Vagina (tissue), 2 donors: ENCODE measurements at regions of chr2 and their contacts with region 1.

Region 1: GRCh38 chr2:99960790-99961189 is 181.6 kb downstream of the AFF3 start:
- DNase-seq: peak in 1 of 2 donors; percentile 58
- H3K4me3 ChIP-seq: no peak overlapping the region
- H3K27ac ChIP-seq: no peak overlapping the region
- H3K4me1 ChIP-seq: no peaks in the 10 kb centered on the region
- H3K27me3 ChIP-seq: no peaks in the 10 kb centered on the region
- CTCF ChIP-seq: no peak
- POLR2A ChIP-seq: no peak

Region 2: DNA sequence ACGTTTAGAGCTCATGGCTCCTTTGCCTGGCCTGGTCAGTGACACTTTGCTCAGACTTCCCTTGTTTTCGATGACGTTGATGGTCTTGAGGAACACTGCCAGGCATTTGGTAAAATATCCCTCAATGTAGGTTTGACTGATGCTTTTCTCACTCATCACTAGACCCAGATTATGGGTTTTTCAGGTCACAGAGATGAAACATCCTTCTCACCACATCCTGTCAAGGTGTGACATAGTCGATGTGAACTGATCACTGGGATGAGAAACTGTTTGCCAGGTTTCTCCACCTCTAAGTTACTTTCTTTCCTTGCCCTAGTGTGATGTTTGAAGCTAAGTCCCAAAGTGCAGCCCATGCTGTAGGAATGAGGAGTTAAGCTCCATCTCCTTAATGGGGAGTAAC is 100.1 kb after region 1 on chr2:
- intact Hi-C with region 1: no loop called
- DNase-seq: no peak
- H3K4me3 ChIP-seq: no peak overlapping the region
- H3K27ac ChIP-seq: no peak overlapping the region
- H3K4me1 ChIP-seq: peaks cover 6% of the 10 kb centered on the region
- H3K27me3 ChIP-seq: no peaks in the 10 kb centered on the region
- CTCF ChIP-seq: no peak
- POLR2A ChIP-seq: no peak

Region 3: GRCh38 chr2:101080211-101081068 is 1119.7 kb after region 1 on chr2:
- intact Hi-C with region 1: loop called (anchors 5 kb)
- DNase-seq: no peak
- H3K4me3 ChIP-seq: no peak overlapping the region
- H3K27ac ChIP-seq: peak overlapping the region; percentile 48
- H3K4me1 ChIP-seq: peaks cover 8% of the 10 kb centered on the region
- H3K27me3 ChIP-seq: no peaks in the 10 kb centered on the region
- CTCF ChIP-seq: no peak
- POLR2A ChIP-seq: no peak